GM12878 (cell line): ENCODE measurements at regions of chr2 and their contacts with region 1.

Region 1: DNA sequence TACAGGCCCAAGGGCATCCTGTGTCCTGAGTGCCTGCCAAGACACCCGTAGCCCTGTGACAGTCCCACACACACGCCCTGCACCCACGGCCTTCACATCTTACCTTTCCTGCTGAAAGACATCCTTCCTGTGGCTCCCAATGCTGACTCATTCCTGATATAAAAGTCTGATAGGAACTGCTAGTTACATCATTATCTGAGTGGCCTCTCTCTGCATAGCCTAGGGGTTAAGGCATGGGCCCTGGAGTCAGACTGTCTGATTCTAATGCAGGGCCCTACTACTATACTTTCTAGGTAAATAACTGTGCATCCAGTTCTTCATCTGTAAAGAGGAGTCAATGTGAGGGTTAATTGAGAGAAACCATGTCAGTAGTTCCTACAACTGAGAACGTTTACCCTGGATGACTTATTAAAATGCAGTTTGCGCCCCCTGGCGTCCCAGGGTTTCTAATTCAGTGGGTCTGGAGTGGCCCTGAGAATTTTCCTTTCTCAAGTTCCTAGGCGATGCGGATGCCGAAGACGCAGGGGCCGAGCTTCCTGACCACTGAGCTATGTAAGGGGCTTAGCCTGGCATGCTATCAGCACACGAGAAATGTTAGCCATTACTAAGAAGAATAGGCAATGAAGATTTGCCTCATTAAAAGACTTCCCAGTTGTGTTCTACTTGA is 6.0 kb upstream of the GPR45 start:
- DNase-seq: no peak
- ATAC-seq: peak; percentile 87
- H3K4me3 ChIP-seq: no peak overlapping the region
- H3K27ac ChIP-seq: no peak overlapping the region
- H3K4me1 ChIP-seq: no peaks in the 10 kb centered on the region
- H3K27me3 ChIP-seq: peaks cover 0 to 1% of the 10 kb centered on the region in 2 experiments; a peak in 1 of 4 replicates
- CTCF ChIP-seq: peak; percentile 69 to 77 (median 70)
- EP300 ChIP-seq: no peak
- POLR2A ChIP-seq: no peak
- RAD21 ChIP-seq: peak; percentile 72

Region 2: DNA sequence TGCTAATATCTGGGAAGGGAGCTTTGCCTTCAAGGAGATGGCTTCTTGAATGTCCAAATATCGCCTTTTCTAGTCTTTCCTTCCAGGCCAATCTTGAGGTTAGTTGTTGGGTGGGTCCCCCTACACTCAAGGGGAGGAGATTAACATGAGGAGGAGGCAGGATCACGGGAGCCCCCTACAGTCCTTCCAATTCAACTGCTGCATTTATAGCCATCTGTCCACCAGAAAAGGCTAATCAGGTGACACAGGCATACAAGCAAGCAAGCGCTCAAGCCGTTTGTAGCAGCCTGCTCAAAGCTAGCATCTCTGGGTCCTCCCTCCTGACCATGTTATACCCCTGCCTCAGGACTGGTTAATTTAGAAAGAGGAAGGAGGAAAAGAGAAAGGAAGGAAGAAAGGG is 110.1 kb before region 1 on chr2:
- CTCF ChIA-PET with region 1: interaction called, 12 read pairs
- POLR2A ChIA-PET with region 1: interaction called, 4 read pairs
- RAD21 ChIA-PET with region 1: no interaction called
- SMC1A ChIA-PET with region 1: interaction called, 4 read pairs
- in situ Hi-C with region 1: no loop called
- intact Hi-C with region 1: no loop called
- DNase-seq: no peak
- ATAC-seq: no peak
- H3K4me3 ChIP-seq: no peak overlapping the region
- H3K27ac ChIP-seq: no peak overlapping the region
- H3K4me1 ChIP-seq: peaks cover 10% of the 10 kb centered on the region
- H3K27me3 ChIP-seq: no peaks in the 10 kb centered on the region
- CTCF ChIP-seq: no peak
- EP300 ChIP-seq: no peak
- POLR2A ChIP-seq: no peak
- RAD21 ChIP-seq: no peak

Region 3: GRCh38 chr2:105309147-105309545 is 73.6 kb after region 1 on chr2:
- CTCF ChIA-PET with region 1: no interaction called
- POLR2A ChIA-PET with region 1: no interaction called
- RAD21 ChIA-PET with region 1: no interaction called
- SMC1A ChIA-PET with region 1: no interaction called
- in situ Hi-C with region 1: no loop called
- intact Hi-C with region 1: no loop called
- DNase-seq: no peak
- ATAC-seq: no peak
- H3K4me3 ChIP-seq: no peak overlapping the region
- H3K27ac ChIP-seq: no peak overlapping the region
- H3K4me1 ChIP-seq: peaks cover 5% of the 10 kb centered on the region
- H3K27me3 ChIP-seq: no peaks in the 10 kb centered on the region
- CTCF ChIP-seq: no peak
- EP300 ChIP-seq: no peak
- POLR2A ChIP-seq: no peak
- RAD21 ChIP-seq: no peak

Region 4: GRCh38 chr2:105873721-105874120 is 638.2 kb after region 1 on chr2:
- CTCF ChIA-PET with region 1: no interaction called
- POLR2A ChIA-PET with region 1: no interaction called
- RAD21 ChIA-PET with region 1: no interaction called
- SMC1A ChIA-PET with region 1: no interaction called
- in situ Hi-C with region 1: no loop called
- intact Hi-C with region 1: no loop called
- DNase-seq: peak; percentile 71
- ATAC-seq: peak; percentile 97
- H3K4me3 ChIP-seq: no peak overlapping the region
- H3K27ac ChIP-seq: peak overlapping the region; percentile 63
- H3K4me1 ChIP-seq: peaks cover 27% of the 10 kb centered on the region
- H3K27me3 ChIP-seq: no peaks in the 10 kb centered on the region
- CTCF ChIP-seq: peak in 1 of 3 experiments; percentile 5; a peak in 1 of 6 replicates
- EP300 ChIP-seq: peak; percentile 70 to 92; a peak in 3 of 4 replicates
- POLR2A ChIP-seq: peak; percentile 52; the same call in 1 of the 2 replicates
- RAD21 ChIP-seq: peak; percentile 38; the same call in 1 of the 2 replicates

Region 5: DNA sequence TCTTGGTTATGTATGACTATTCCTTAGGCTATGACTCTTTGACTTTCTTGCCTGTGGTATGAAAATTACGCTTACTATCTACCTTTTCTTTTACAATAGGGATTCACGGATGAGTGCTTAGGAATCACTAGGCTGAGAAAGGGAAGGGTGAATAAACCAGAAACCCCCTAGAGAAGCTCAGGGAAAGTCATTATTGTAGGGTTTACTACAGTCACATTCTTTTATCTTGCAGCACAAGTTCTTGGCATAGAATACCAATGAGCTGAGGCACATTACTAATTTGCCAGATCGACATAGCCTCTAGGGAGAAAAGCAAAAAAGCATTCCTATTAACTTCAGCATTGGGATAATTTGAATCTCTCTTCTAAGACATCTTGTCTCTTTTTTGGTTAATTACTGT is 1547.2 kb after region 1 on chr2:
- CTCF ChIA-PET with region 1: no interaction called
- POLR2A ChIA-PET with region 1: no interaction called
- RAD21 ChIA-PET with region 1: no interaction called
- SMC1A ChIA-PET with region 1: no interaction called
- in situ Hi-C with region 1: no loop called
- intact Hi-C with region 1: no loop called
- DNase-seq: no peak
- ATAC-seq: no peak
- H3K4me3 ChIP-seq: no peak overlapping the region
- H3K27ac ChIP-seq: no peak overlapping the region
- H3K4me1 ChIP-seq: no peaks in the 10 kb centered on the region
- H3K27me3 ChIP-seq: no peaks in the 10 kb centered on the region
- CTCF ChIP-seq: no peak
- EP300 ChIP-seq: no peak
- POLR2A ChIP-seq: no peak
- RAD21 ChIP-seq: no peak